ENCODE measurements at regions of chr1 and their contacts with region 1.

Region 1: GRCh38 chr1:200738740-200739498 is at the start of gene CAMSAP2:
- DNase-seq: peak; percentile 74
- ATAC-seq: peak; percentile 51
- H3K4me3 Mint-ChIP-seq: peak within 1 kb of the TSS; percentile 91
- H3K27ac Mint-ChIP-seq: peak within 1 kb of the TSS; percentile 90
- H3K4me1 Mint-ChIP-seq: peaks cover 44% of the 10 kb centered on the region
- H3K27me3 Mint-ChIP-seq: peaks cover 4% of the 10 kb centered on the region
- total RNA-seq, gene CAMSAP2: 2.3 to 3.0 TPM

Region 2: GRCh38 chr1:199931653-199932377 is 807.1 kb before region 1 on chr1:
- CTCF ChIA-PET with region 1: no interaction called
- POLR2A ChIA-PET with region 1: no interaction called
- intact Hi-C with region 1: no loop called
- DNase-seq: peak; percentile 35
- ATAC-seq: peak; percentile 42
- H3K4me3 Mint-ChIP-seq: no peak overlapping the region
- H3K27ac Mint-ChIP-seq: no peak overlapping the region
- H3K4me1 Mint-ChIP-seq: peaks cover 8% of the 10 kb centered on the region
- H3K27me3 Mint-ChIP-seq: peaks cover 33% of the 10 kb centered on the region

Region 3: DNA sequence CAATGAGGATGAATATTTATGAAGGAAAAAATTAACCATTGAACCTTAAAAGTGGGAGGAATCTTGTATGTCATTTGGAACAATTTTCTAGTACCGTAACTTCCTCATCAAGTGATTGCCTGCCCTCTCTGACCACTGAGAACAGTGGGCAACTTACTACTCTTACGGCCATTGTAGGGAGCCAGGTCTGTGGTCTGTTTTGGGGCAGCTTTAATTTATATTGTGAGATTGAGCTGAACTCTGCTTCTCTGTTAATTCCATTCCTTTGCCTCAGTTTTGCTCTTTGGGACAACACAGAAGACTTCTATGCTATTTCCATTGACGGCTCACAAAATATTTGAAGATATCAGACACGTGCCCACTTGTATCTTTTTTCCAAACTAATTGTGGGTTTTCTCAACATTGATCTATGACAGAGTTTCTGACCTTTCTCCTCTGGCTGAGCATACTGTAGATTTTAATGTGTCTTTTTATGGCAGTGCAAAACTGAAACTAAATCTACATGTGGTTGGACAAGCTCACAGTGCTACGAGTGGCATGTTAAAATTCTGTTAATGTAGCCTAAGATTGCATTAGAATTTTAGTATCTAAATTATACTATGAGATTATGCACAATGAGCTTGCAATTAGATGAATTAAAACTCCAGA is 301.2 kb before region 1 on chr1:
- CTCF ChIA-PET with region 1: no interaction called
- POLR2A ChIA-PET with region 1: no interaction called
- intact Hi-C with region 1: loop called in 1 of 2 experiments (anchors 10 kb)
- DNase-seq: no peak
- ATAC-seq: peak; percentile 87
- H3K4me3 Mint-ChIP-seq: peak overlapping the region; percentile 37
- H3K27ac Mint-ChIP-seq: peak overlapping the region; percentile 2
- H3K4me1 Mint-ChIP-seq: peaks cover 13% of the 10 kb centered on the region
- H3K27me3 Mint-ChIP-seq: peaks cover 2% of the 10 kb centered on the region

Region 4: DNA sequence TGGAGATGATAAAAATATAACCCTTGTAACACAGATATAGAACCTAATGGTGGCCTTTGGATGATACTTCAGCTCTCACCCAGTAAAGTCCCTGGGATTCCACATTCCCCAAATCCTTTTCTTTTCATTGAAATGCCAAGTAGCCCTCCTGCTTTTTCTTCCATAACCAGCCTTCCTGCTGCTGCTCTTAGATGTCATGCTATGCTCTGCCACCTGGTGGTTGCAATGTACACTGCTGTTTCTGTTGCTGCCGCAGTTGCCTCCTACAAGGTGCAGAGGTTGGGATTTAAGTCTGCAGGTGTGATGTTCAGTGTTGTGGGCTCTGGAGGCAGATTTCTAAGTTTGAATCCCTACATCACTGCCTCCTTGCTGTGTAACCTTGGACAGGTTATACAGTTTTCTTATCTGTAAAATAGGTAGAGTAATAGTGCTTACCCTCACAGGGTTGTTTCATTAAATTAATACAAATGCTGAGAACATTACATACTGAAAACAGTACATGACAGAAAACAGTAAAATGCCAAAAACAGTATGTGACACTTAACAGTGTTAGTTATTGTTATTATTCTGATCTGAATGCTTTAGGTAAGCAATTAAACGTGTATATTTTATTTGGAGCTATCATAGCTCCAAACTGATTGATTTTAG is 64.1 kb after region 1 on chr1:
- CTCF ChIA-PET with region 1: no interaction called
- POLR2A ChIA-PET with region 1: no interaction called
- intact Hi-C with region 1: loop called in 1 of 2 experiments (anchors 2 kb)
- DNase-seq: peak; percentile 86
- ATAC-seq: peak; percentile 88
- H3K4me3 Mint-ChIP-seq: no peak overlapping the region
- H3K27ac Mint-ChIP-seq: no peak overlapping the region
- H3K4me1 Mint-ChIP-seq: peaks cover 2% of the 10 kb centered on the region
- H3K27me3 Mint-ChIP-seq: no peaks in the 10 kb centered on the region